GM13976 (cell line): ENCODE measurements at regions of chr1 and their contacts with region 1.

Region 1: GRCh38 chr1:154558575-154559465 is at the start of gene UBE2Q1:
- DNase-seq: peak; percentile 97
- CTCF ChIP-seq: no peak

Region 2: DNA sequence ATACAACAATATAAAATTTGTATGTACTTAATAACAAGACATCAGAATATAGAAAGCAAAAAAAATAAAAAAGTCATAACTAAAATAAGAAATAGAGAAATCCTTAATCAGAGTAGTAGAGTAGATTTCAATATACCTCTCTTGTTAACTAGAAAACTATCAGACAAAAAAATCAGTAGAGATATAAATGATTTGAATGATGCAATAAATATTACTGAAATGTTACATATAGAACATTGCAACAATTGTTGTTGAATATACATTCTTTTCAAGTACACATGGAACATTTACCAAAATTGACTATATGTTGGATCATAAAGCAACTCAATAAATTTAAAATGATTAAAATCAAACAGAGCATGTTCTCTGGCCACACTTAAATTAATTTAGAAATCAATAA is 81.1 kb after region 1 on chr1:
- in situ Hi-C with region 1: no loop called
- DNase-seq: no peak
- CTCF ChIP-seq: no peak

Region 3: DNA sequence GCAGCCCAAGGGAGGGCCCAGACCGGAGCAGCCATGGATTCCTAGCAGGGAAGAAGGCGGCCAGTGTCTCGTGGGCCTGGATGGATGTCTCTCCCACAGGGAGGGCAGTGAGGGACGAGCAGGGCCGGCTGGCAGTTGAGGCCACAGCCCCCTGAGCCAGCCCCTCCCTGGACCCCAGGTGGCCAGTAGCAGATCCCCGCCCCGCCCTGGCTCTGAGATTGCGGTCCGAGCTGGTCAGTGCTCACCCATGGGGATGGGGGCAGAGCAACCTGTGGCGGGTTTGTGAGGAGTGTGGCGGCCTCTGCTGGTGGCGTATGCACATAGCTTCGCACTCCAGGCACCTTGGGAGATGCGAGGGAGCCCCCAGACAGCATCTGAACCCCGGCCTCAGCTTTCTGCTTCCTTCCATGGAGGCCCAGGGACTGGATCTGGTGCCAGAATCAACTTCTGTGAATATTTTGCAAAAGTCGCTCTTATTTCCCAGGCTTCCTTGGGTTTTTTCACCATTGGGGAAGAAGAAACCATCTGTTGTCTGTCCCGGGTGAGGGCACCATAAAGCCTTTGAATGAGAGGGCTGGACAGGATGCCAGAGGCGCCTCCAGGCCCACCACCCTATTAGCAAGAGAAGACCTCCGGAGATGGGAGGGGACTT is 319.7 kb after region 1 on chr1:
- in situ Hi-C with region 1: loop called (anchors 25 kb)
- DNase-seq: peak; percentile 87
- CTCF ChIP-seq: peak; percentile 94

Region 4: DNA sequence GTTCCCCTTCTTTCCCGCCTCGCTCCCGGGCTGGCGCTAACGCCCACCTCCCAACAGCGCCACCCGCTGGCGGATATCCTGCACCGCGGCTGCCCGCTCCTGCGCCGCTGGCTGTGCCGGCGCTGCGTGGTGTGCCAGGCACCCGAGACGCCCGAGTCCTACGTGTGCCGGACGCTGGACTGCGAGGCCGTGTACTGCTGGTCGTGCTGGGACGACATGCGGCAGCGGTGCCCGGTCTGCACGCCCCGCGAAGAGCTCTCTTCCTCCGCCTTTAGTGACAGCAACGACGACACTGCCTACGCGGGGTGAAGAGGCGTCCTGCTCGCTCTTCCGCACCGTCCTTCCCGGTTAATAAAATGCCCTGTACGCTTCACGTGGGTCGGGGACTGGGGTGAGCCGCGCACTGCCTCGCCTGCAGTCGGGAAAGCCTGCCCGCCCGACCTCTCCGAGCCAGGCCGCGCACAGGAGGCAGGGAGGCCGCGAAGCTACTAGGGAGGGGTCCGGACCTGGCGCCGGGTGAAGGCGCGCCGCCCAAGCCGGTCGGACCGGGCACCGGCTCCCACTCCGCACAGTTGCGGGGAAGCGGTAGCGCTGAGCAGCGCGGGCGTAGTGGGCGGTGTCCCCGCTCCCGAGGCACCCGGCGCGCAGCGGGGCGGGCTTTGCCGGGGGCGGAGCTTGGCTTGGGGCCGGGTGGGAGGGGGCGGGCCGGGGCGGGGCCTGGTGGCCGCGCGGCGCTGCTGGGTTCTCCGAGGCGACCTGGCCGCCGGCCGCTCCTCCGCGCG is 491.9 kb after region 1 on chr1 and contains the start of gene ADAM15:
- in situ Hi-C with region 1: loop called (anchors 25 kb)
- DNase-seq: peak; percentile 99
- CTCF ChIP-seq: peak; percentile 99